Heart left ventricle (tissue), 16 donors: ENCODE measurements at regions of chr13 and their contacts with region 1.

Region 1: GRCh38 chr13:30341815-30342570 is 34.6 kb upstream of the KATNAL1 start:
- DNase-seq: peak; percentile 82 to 93 (median 89)
- ATAC-seq: peak; percentile 81 to 87 (median 86)
- H3K4me3 ChIP-seq: no peak overlapping the region
- H3K27ac ChIP-seq: peak overlapping the region; percentile 59 to 92 (median 76)
- H3K4me1 ChIP-seq: peaks cover 0 to 44% (median 26%) of the 10 kb centered on the region in 12 donors
- H3K27me3 ChIP-seq: no peaks in the 10 kb centered on the region
- CTCF ChIP-seq: no peak
- POLR2A ChIP-seq: no peak

Region 2: DNA sequence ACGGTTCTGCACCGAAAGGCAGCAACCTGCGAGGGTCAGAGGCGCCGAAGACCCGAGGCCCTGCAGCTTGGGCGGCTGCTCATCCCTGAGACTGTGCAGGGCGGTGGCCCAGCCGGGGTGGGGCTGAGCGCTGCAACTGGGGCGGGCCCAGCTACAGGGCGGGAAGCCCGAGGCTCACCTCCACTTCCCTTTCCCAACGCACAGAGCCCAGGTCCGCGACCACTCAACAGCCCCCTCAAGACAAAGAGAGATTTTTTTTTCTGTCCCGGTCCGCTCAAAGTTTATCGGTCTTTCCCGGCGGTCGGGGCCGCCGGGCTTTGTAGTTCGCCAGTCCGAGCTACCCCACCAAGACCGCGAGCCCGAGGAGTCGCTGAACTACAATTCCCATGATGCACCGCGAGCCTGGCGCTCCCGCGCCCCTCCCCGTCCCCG is 35.2 kb before region 1 on chr13:
- intact Hi-C with region 1: loop called in 1 of 10 experiments (anchors 1 kb)
- DNase-seq: peak; percentile 95 to 96 (median 96)
- ATAC-seq: peak; percentile 93 to 97 (median 96)
- H3K4me3 ChIP-seq: peak overlapping the region; percentile 80 to 100 (median 96)
- H3K27ac ChIP-seq: peak overlapping the region; percentile 87 to 98 (median 96)
- H3K4me1 ChIP-seq: peaks cover 3 to 56% (median 28%) of the 10 kb centered on the region in 12 donors
- H3K27me3 ChIP-seq: no peaks in the 10 kb centered on the region
- CTCF ChIP-seq: no peak
- POLR2A ChIP-seq: no peak

Region 3: GRCh38 chr13:30395192-30396084 is 53.4 kb after region 1 on chr13:
- intact Hi-C with region 1: loop called in 1 of 10 experiments (anchors 1 kb)
- DNase-seq: peak; percentile 82 to 92 (median 86)
- ATAC-seq: peak; percentile 72 to 88 (median 86)
- H3K4me3 ChIP-seq: peak overlapping the region; percentile 18 to 79 (median 61)
- H3K27ac ChIP-seq: peak overlapping the region; percentile 31 to 95 (median 74)
- H3K4me1 ChIP-seq: peaks cover 0 to 16% (median 0%) of the 10 kb centered on the region in 12 donors
- H3K27me3 ChIP-seq: no peaks in the 10 kb centered on the region
- CTCF ChIP-seq: peak in 1 of 12 donors; percentile 10
- POLR2A ChIP-seq: peak in 1 of 2 donors; percentile 40